Gastrocnemius medialis (tissue), 4 donors: ENCODE measurements at regions of chr12 and their contacts with region 1.

Region 1: GRCh38 chr12:43758728-43759563 is at the starts of genes IRAK4 and PUS7L:
- DNase-seq: peak; percentile 90 to 95
- ATAC-seq: peak; percentile 97
- H3K4me3 ChIP-seq: peak within 1 kb of the TSS; percentile 77 to 90 (median 85)
- H3K27ac ChIP-seq: peak within 1 kb of the TSS; percentile 77 to 89 (median 85)
- H3K4me1 ChIP-seq: peaks cover 19 to 22% of the 10 kb centered on the region in 2 donors
- H3K27me3 ChIP-seq: no peaks in the 10 kb centered on the region
- CTCF ChIP-seq: peak in 4 of 5 experiments; percentile 12 to 59 (median 38)
- POLR2A ChIP-seq: peak; percentile 61
- total RNA-seq, gene IRAK4: 2.5 to 10.0 (median 2.9) TPM
- total RNA-seq, gene PUS7L: 2.0 to 5.8 (median 3.7) TPM

Region 2: GRCh38 chr12:43740511-43741100 is 18.3 kb before region 1 on chr12:
- in situ Hi-C with region 1: no loop called
- intact Hi-C with region 1: no loop called
- DNase-seq: no peak
- ATAC-seq: no peak
- H3K4me3 ChIP-seq: no peak overlapping the region
- H3K27ac ChIP-seq: no peak overlapping the region
- H3K4me1 ChIP-seq: peaks cover 8 to 11% of the 10 kb centered on the region in 2 donors
- H3K27me3 ChIP-seq: no peaks in the 10 kb centered on the region
- CTCF ChIP-seq: no peak
- POLR2A ChIP-seq: no peak

Region 3: GRCh38 chr12:43805860-43806736 is 47.2 kb after region 1 on chr12 and contains the start of gene TWF1:
- in situ Hi-C with region 1: no loop called
- intact Hi-C with region 1: loop called (anchors 1 kb)
- DNase-seq: peak; percentile 58 to 77
- ATAC-seq: peak; percentile 98
- H3K4me3 ChIP-seq: peak within 1 kb of the TSS; percentile 80 to 92 (median 86)
- H3K27ac ChIP-seq: peak within 1 kb of the TSS; percentile 87 to 96 (median 94)
- H3K4me1 ChIP-seq: peaks cover 21 to 27% of the 10 kb centered on the region in 2 donors
- H3K27me3 ChIP-seq: no peaks in the 10 kb centered on the region
- CTCF ChIP-seq: peak in 4 of 5 experiments; percentile 31 to 56 (median 43)
- POLR2A ChIP-seq: peak; percentile 62 to 76
- total RNA-seq, gene TWF1: 7.4 to 10.7 (median 9.0) TPM

Region 4: DNA sequence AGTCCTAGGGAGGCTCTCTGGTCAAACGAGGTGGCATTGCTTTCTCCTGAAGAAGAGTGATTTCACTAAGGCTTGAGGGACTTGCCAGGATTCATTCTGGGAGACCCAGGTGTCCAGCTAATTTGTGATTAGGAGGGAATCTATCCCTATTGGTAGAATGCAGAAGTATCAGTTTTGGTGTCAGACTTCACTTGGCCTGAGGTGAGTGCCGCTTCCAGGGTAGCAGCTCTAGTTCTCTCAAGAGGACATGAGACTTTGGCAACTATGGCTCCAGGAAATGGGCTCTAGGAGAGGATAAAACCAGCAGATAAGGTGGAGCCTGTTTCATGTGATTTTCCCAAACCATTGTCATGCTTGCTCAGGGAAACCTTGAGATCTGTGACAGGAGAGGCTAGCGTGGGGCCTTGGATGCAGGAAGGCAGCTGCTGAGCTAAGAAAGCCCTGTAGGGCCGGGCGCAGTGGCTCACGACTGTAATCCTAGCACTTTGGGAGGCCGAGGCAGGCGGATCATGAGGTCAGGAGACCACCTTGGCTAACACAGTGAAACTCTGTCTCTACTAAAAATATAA is 65.3 kb after region 1 on chr12:
- in situ Hi-C with region 1: no loop called
- intact Hi-C with region 1: no loop called
- DNase-seq: no peak
- ATAC-seq: no peak
- H3K4me3 ChIP-seq: no peak overlapping the region
- H3K27ac ChIP-seq: no peak overlapping the region
- H3K4me1 ChIP-seq: no peaks in the 10 kb centered on the region
- H3K27me3 ChIP-seq: no peaks in the 10 kb centered on the region
- CTCF ChIP-seq: no peak
- POLR2A ChIP-seq: no peak

Region 5: DNA sequence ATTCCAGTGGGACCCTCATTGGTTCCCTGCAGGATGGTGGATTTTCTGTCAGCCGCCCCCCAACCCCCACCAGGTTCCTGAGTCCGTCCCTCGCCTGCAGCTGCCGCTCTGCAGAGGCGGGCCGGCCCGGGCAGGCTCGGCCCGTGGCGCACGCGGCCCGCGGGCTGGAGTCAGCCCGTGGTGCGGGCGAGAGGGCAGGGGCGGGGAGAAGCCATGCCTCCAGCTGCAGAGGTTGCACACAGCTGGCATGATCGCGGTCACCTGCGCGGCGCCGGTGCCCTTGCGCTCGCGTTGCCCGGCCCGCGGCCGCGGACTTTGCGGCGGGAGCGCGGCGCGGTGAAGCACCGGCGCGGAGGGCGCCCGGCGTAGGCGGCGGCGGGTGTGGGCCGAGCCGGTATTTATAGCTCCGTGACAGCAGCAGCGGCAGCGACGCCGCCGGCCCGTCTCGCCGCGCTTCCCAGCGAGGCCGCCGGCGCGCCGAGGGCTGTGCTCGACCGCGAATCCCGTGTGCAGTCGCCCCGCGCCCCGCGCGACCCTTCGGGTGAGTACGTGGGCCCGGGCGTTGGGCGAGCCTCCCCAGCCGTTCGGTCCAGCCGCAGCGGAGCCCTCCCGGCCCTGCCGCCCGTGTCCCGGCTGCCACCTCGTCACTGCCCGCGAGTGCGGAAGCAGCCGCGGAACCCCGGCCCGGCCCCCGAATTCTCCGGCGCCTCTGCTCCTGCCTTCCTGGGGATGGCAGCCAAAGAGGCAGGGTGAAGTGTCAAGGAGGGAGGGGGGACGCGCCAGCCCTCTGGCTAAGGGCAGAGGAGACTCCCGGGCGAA is 76.9 kb after region 1 on chr12 and contains the start of gene TMEM117:
- in situ Hi-C with region 1: no loop called
- intact Hi-C with region 1: loop called (anchors 2 kb)
- DNase-seq: peak; percentile 43 to 61
- ATAC-seq: peak; percentile 85 to 94
- H3K4me3 ChIP-seq: peak within 1 kb of the TSS; percentile 67 to 87 (median 70)
- H3K27ac ChIP-seq: peak within 1 kb of the TSS; percentile 82 to 96 (median 93)
- H3K4me1 ChIP-seq: peaks cover 0 to 15% of the 10 kb centered on the region in 2 donors
- H3K27me3 ChIP-seq: no peaks in the 10 kb centered on the region
- CTCF ChIP-seq: no peak
- POLR2A ChIP-seq: peak; percentile 63 to 69
- total RNA-seq, gene TMEM117: 3.5 to 19.4 (median 6.1) TPM